Prostate gland (tissue), 2 donors: ENCODE measurements at regions of chrX and their contacts with region 1.

Region 1: GRCh38 chrX:50988649-50989048 is 78.1 kb downstream of the BMP15 start:
- DNase-seq: peak; percentile 4
- H3K4me3 ChIP-seq: no peak overlapping the region
- H3K27ac ChIP-seq: no peak overlapping the region
- H3K4me1 ChIP-seq: no peaks in the 10 kb centered on the region
- H3K27me3 ChIP-seq: no peaks in the 10 kb centered on the region
- CTCF ChIP-seq: peak in 1 of 4 experiments; percentile 27
- POLR2A ChIP-seq: no peak

Region 2: DNA sequence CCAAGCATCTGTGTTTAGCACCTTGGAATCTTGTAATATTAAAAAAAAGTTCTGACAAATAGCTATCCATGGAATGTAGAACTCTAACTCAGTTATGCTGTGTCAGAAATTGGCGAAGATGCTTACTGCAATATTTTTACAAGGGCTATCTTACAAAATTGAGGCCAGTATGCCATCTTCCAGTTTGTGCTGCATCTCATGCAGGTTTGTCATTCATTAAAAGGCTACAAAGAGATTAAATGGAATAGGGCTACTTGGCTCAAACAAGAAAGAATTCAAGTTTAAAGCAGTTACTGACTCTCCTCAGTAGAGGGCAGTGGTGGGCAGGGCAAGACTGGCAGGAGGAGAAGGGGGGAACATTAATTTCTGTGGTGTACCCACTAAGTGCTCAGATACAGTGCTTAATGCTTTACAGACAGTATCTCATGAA is 241.2 kb before region 1 on chrX:
- intact Hi-C with region 1: loop called (anchors 5 kb)
- DNase-seq: no peak
- H3K4me3 ChIP-seq: no peak overlapping the region
- H3K27ac ChIP-seq: no peak overlapping the region
- H3K4me1 ChIP-seq: no peaks in the 10 kb centered on the region
- H3K27me3 ChIP-seq: no peaks in the 10 kb centered on the region
- CTCF ChIP-seq: peak in 3 of 4 experiments; percentile 32 to 54 (median 37)
- POLR2A ChIP-seq: no peak

Region 3: GRCh38 chrX:51098046-51098445 is 109.4 kb after region 1 on chrX:
- intact Hi-C with region 1: no loop called
- DNase-seq: no peak
- H3K4me3 ChIP-seq: no peak overlapping the region
- H3K27ac ChIP-seq: no peak overlapping the region
- H3K4me1 ChIP-seq: no peaks in the 10 kb centered on the region
- H3K27me3 ChIP-seq: no peaks in the 10 kb centered on the region
- CTCF ChIP-seq: no peak
- POLR2A ChIP-seq: no peak